Activated B cell treated with CpG ODN at 0.5 μM for 24 hours (primary cell): ENCODE measurements at regions of chr19 and their contacts with region 1.

Region 1: DNA sequence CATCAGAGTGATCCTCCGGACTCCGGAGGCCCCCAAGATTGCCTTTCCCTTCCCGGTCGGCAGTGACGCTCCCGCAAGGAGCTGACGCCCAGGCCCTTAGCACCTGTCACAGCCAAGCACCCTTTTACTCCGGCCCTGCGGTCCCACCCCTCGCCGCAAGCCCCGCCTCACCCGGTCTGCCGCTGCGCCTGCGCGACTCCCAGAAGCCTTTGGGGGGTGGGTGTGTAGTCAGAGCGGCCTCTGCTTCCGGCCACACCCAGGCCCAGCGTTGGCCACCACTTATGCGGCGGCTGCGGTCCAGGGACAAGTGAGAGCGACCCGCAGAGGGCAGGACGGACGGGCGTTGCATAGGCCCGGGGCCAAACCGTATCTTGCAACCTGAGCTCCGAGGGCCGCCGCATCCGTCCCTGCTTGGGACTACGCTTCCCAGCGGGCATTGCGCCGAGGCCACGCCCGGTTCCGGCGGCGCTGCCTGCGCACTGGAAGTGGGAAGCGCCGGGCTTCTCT is 441 bp upstream of the ZFP28 start:
- DNase-seq: peak; percentile 92
- ATAC-seq: peak; percentile 89
- H3K4me3 Mint-ChIP-seq: peak overlapping the region; percentile 91
- H3K27ac Mint-ChIP-seq: peak overlapping the region; percentile 94
- H3K4me1 Mint-ChIP-seq: peaks cover 19% of the 10 kb centered on the region
- H3K27me3 Mint-ChIP-seq: no peaks in the 10 kb centered on the region
- CTCF ChIP-seq: no peak

Region 2: DNA sequence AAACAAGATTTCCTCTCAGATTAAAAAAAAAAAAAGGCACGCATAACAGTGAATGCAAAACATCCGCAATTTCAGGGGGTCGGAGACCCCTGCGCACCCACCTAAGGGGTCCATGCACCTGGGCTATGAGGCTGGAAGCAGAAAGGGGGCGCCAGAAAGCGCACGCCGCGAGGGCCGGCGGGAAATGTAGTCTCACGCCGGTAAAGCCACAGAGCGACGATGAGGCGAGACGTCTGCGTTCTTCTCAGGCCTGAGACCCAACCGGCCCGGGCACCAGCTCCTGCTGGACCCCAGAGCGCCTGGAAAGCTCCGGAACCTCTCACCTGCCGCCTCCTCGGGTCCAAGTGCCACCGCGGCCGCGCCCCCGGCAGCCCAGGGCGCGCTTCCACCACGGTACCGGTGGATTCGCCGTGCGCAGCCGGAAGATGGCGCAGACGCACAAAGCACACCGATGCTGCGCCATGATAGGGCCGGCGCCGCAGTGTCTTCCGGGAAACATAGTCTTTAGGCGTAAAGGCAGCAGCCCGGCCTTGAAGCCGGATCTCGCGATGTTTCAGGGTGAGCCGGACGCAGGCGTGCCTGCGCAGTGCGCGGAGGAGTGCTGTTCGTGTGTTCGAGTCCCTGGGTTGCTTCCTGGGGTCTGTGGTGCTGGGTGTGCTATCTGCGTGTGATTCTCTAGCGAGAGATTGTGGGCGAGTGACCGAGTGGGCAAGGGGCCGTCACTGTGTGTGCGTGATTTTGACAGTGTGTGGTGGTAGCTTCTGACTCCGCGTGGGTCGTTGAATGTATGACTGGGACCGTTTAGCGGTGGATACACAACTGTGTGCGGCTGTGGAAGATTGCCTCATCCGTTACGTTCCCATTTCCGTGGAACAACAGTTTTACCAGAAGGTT is 144.9 kb before region 1 on chr19 and contains the start of gene ZNF582:
- CTCF ChIA-PET with region 1: no interaction called
- POLR2A ChIA-PET with region 1: no interaction called
- intact Hi-C with region 1: loop called (anchors 1 kb)
- DNase-seq: peak; percentile 85
- ATAC-seq: peak; percentile 96
- H3K4me3 Mint-ChIP-seq: peak within 1 kb of the TSS; percentile 97
- H3K27ac Mint-ChIP-seq: peak within 1 kb of the TSS; percentile 96
- H3K4me1 Mint-ChIP-seq: peaks cover 13% of the 10 kb centered on the region
- H3K27me3 Mint-ChIP-seq: no peaks in the 10 kb centered on the region
- CTCF ChIP-seq: no peak
- total RNA-seq, gene ZNF582: 7.4 and 7.9 TPM in 2 replicates

Region 3: DNA sequence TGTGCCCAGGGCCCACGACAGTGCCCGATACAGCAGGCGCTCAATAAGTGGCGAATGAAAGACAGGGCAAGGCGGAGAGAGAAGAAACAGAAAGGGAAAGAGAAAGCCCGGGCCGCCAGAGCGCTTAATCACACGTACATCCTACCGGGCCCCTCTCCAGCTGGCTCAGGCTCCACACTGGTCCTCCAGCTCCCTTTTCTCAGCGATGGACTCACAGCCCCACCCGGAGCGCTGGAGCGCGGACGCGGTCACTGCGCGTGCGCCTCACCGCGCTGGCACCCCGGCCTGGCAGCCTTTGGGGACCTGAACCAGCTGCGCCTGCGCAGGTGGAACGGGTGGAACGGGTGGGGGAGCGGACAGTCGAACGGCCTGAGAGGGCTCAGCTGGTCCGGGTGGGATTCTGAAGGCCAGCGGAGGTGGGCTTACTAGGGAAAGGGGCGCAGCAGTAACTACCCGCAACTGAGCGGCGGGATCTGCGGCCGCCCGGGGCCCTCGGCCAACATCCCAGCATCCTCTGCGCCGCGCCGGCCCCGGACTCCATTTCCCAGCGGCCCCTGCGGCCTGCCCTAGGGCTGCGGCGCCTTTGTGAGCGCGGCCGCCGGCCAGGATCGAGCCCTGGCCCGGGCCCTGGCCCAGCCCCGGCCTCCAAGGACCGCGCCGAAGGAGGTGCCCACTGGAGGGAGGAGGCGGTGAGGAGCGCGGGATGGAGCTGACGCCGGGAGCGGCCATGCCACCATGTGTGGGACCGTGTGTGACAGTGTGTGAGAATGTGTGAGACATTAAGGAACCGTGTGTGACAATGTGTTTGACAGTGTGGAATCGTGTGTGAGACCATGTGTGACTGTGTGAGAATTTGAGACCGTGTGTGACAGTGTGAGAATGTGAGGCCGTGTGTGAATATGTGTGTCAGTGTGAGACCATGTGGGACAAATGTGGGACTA is 134.3 kb before region 1 on chr19 and contains the start of gene ZNF583:
- CTCF ChIA-PET with region 1: no interaction called
- POLR2A ChIA-PET with region 1: no interaction called
- intact Hi-C with region 1: loop called (anchors 1 kb)
- DNase-seq: peak; percentile 93
- ATAC-seq: peak; percentile 87
- H3K4me3 Mint-ChIP-seq: peak within 1 kb of the TSS; percentile 95
- H3K27ac Mint-ChIP-seq: peak within 1 kb of the TSS; percentile 96
- H3K4me1 Mint-ChIP-seq: peaks cover 29% of the 10 kb centered on the region
- H3K27me3 Mint-ChIP-seq: no peaks in the 10 kb centered on the region
- CTCF ChIP-seq: no peak
- total RNA-seq, gene ZNF583: 5.7 and 6.0 TPM in 2 replicates

Region 4: DNA sequence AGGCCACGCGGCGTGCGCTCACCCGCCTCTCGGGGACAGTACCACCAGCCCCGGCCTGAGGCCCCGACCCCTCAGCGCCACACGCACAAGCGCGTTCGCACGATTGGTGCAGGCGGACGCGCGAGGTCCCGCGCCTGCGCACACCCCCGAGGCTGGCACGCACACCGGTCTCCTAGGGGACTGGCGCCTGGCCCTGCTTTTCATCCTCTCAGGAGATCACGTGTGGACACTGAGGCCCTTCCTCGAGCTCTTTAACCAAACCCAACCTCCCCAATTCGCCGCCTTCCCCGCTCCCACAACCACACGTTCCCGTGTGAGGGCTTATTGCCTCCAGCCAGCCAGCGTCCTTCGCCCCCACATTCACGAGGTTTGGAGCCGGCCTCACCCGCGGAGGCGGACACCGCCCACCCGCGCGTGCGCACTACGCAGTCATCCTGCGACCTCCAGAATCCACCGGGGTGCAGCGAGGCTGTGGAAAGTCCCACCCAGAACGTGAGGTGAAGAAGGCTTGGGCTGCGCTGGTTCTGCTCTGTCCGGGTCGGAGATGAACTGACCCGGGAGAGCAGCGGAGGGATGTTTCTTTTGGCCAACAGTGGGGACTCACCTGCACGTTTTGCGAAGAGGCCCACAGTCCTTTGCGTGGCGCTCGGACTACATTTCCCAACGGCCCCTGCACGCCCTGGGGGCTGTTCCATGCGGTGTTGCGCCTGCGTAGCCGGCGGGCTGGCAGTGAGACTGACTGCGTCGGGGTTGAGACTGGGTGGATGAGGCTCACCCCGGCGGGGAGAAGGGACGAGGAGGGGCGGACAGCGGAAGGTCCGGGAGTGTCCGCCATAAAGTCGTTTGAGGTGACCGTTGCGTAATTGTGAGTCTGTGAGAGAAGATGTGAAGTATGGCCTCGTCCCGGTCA is 60.6 kb before region 1 on chr19:
- CTCF ChIA-PET with region 1: no interaction called
- POLR2A ChIA-PET with region 1: no interaction called
- intact Hi-C with region 1: loop called (anchors 1 kb)
- DNase-seq: peak; percentile 73
- ATAC-seq: peak; percentile 80
- H3K4me3 Mint-ChIP-seq: peak overlapping the region; percentile 96
- H3K27ac Mint-ChIP-seq: peak overlapping the region; percentile 96
- H3K4me1 Mint-ChIP-seq: peaks cover 19% of the 10 kb centered on the region
- H3K27me3 Mint-ChIP-seq: peaks cover 8% of the 10 kb centered on the region
- CTCF ChIP-seq: no peak

Region 5: GRCh38 chr19:56507446-56508289 is 30.6 kb before region 1 on chr19 and contains the start of gene ZNF471:
- CTCF ChIA-PET with region 1: no interaction called
- POLR2A ChIA-PET with region 1: no interaction called
- intact Hi-C with region 1: loop called (anchors 1 kb)
- DNase-seq: peak; percentile 81
- ATAC-seq: peak; percentile 99
- H3K4me3 Mint-ChIP-seq: no peak within 1 kb of the TSS
- H3K27ac Mint-ChIP-seq: no peak within 1 kb of the TSS
- H3K4me1 Mint-ChIP-seq: peaks cover 9% of the 10 kb centered on the region
- H3K27me3 Mint-ChIP-seq: no peaks in the 10 kb centered on the region
- CTCF ChIP-seq: no peak
- total RNA-seq, gene ZNF471: 1.8 and 2.1 TPM in 2 replicates

Region 6: DNA sequence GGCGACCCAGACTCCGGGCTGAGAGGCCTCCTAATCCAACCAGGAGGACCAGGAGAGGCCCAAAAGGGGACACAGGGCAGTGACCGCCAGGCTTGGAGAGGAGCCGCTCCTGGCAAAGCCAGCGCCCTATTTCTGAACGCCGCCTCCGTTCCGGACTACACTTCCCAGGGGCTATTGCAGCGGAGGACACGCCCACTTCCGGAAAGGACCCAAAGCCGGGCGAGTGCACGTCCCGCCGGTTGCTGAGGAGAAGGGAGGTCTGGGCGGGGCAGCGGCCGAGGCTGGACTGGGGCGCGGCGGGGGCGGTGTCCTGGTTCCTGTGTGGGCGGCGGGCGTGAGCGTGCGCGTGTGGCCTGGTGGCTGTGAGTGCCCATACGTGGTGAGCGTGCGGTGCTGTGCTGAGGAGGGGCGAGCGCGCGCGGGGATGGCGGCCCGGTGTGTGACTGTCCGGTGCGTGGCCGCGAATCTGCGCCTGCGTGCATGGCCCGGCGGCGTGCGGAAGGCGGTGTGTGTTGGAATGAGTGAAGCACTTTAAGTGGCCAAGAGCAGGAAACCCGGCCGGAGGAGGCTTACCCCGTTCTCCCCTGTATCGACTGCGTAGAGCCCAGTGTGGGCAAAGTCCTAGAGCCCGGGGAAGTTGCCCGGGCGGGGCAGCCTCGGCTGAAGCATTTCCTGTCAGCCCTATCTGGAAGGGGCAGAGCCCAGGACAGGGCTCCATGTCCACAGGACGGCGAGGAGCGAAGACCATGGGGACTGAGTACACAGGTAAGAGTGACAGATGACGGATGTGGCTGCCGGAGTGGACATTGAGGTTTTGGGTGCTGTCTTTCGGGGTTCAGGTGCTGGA is 29.2 kb after region 1 on chr19 and contains the start of gene ZNF470:
- CTCF ChIA-PET with region 1: no interaction called
- POLR2A ChIA-PET with region 1: interaction called, 6 read pairs
- intact Hi-C with region 1: loop called (anchors 1 kb)
- DNase-seq: peak; percentile 86
- ATAC-seq: peak; percentile 98
- H3K4me3 Mint-ChIP-seq: peak within 1 kb of the TSS; percentile 96
- H3K27ac Mint-ChIP-seq: peak within 1 kb of the TSS; percentile 88
- H3K4me1 Mint-ChIP-seq: peaks cover 15% of the 10 kb centered on the region
- H3K27me3 Mint-ChIP-seq: no peaks in the 10 kb centered on the region
- CTCF ChIP-seq: no peak
- total RNA-seq, gene ZNF470: 5.9 and 6.4 TPM in 2 replicates

Region 7: GRCh38 chr19:56671613-56671994 is 133.3 kb after region 1 on chr19 and contains the start of gene ZNF835:
- CTCF ChIA-PET with region 1: no interaction called
- POLR2A ChIA-PET with region 1: interaction called, 6 read pairs
- intact Hi-C with region 1: loop called (anchors 1 kb)
- DNase-seq: peak; percentile 91
- ATAC-seq: peak; percentile 98
- H3K4me3 Mint-ChIP-seq: peak within 1 kb of the TSS; percentile 94
- H3K27ac Mint-ChIP-seq: peak within 1 kb of the TSS; percentile 84
- H3K4me1 Mint-ChIP-seq: peaks cover 16% of the 10 kb centered on the region
- H3K27me3 Mint-ChIP-seq: no peaks in the 10 kb centered on the region
- CTCF ChIP-seq: no peak
- total RNA-seq, gene ZNF835: 5.5 and 5.7 TPM in 2 replicates